ENCODE measurements at regions of chr2 and their contacts with region 1.

Region 1: DNA sequence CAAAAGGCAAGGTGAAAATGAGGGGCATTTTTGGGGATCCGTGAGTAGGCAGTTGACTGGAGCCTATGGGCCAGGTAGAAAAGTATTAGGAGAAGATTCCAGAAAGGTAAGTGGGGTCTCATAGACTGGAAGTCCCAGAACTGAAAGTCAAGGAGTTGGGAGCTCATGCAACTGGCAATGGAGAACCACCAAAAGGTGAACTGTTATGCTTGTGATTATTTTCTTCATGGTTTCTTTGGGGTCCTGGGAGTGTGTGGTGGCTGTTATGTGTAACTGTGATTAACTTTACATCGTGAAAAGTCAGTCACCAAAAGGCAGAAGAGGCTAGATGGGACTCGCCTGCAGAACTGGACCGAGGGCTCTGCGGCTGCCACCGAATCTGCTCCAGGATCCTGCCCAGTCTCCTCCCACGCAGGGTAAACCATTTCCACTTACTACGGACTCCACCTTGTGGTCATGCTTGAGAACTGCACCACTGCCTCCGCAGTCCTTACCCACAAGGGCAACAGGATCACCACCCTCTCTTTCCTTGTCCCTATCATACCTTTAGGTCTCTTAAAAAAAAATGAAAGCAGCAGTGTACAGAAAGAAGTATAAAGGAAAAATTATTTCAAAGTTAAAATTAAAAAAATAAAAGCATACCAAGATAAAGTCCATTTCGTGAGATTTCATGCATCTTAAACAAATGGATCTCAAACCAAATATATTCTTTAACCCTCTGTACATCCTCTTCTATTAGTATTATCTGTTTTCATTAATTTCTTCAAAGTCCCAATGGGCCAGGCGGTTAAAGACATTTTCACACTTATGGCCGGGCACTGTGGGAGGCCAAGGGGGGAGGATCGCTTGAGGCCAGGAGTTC is 15.6 kb upstream of the CEP68 start:
- DNase-seq: peak; percentile 90
- ATAC-seq: peak; percentile 98

Region 2: GRCh38 chr2:64914735-64915509 is 125.7 kb before region 1 on chr2:
- intact Hi-C with region 1: loop called (anchors 2 kb)
- DNase-seq: no peak
- ATAC-seq: no peak

Measured in Right ventricle myocardium superior (tissue), 1 donor.